ENCODE measurements at regions of chrX and their contacts with region 1.

Region 1: DNA sequence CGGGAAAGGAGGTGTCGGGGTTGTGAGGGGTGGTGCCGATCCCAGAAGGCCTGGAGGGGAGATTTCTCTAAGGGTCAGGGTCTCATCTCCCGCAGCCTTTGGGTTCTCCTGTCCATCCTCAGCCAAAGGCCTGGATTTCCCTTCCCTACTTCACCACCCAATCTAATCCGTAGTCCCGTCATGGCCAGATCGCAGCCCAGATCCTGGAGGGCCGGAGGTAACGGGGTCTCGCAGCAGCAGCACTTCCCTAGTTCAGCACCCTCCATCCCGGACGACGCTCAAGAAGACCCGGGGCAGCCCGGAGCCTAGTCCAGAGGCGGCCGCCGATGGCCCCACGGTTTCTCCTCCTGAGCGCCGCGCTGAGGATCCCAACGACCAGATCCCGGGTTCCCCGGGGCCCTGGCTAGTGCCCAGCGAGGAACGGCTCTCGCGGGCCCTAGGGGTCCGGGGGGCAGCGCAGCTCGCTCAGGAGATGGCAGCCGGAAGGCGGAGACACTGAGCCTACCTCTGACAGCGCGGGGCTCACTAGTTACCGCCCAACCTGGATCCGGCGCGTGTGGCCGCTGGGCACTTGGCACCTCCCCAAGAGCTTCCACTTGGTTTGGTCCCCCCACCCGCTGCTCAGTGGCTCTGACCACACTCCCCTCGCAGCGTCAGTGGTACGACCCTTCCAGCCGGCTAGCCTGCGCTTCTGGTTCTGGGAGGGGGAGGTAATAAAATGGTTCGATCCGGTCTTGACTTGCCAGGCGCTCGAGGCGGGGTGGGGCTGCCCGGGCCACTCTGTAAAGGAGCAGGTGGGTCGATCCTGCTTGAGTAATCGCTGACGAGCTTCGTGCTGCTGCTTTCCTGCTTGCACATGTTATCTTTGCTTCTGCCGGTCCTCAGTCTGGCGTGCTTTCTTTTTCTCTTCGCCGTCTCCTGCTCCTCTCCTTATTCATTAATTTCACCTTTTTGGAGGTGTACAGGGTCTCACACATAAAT is 3.6 kb downstream of the MAGIX start:
- DNase-seq: peak; percentile 39

Region 2: DNA sequence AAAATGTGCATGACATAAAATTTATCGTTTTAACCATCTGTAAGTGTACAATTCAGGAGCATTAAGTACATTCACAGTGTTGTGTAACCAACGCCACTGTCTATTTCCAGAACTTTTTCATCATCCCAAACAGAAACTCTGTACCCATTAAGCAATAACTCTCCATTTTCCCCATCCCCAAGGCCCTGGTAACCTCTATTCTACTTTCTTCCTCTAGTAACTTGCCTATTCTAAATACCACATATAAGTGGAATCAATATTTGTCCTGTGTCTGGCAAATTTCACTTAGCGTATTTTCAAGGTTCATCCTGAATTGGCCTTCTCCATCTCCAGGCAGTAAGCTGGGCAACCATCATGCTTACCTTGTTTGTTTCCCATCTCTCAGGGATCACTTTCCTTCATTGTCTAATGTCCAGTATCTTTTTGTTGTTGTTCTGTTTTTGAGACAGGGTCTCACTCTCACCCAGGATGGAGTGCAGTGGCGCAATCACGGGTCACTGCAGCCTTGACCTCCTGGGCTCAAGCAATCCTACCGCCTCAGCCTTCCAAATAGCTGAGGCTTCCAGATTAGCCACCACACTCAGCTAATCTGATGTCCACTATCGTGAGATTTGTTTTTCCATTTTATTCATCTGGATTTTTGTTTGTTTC is 146.5 kb before region 1 on chrX:
- CTCF ChIA-PET with region 1: no interaction called
- POLR2A ChIA-PET with region 1: no interaction called
- DNase-seq: no peak

Region 3: GRCh38 chrX:49155900-49156837 is 10.0 kb before region 1 on chrX:
- CTCF ChIA-PET with region 1: interaction called, 3 read pairs
- POLR2A ChIA-PET with region 1: interaction called, 18 read pairs
- DNase-seq: peak; percentile 79

Region 4: GRCh38 chrX:49184294-49185061 is 18.3 kb after region 1 on chrX:
- CTCF ChIA-PET with region 1: no interaction called
- POLR2A ChIA-PET with region 1: interaction called, 11 read pairs
- DNase-seq: peak; percentile 81

Measured in HEK293T (cell line).